ENCODE measurements at regions of chr7 and their contacts with region 1.

Region 1: GRCh38 chr7:26090927-26091519 is 61.0 kb upstream of the NFE2L3 start:
- DNase-seq: peak; percentile 62
- ATAC-seq: peak; percentile 45
- H3K4me3 ChIP-seq: no peak overlapping the region
- H3K4me3 Mint-ChIP-seq: peak overlapping the region; percentile 32
- H3K27ac ChIP-seq: no peak overlapping the region
- H3K27ac Mint-ChIP-seq: peak overlapping the region; percentile 0
- H3K4me1 ChIP-seq: peaks cover 17 to 22% of the 10 kb centered on the region in 2 donors
- H3K4me1 Mint-ChIP-seq: peaks cover 26% of the 10 kb centered on the region
- H3K27me3 ChIP-seq: no peaks in the 10 kb centered on the region
- H3K27me3 Mint-ChIP-seq: no peaks in the 10 kb centered on the region
- CTCF ChIP-seq: peak; percentile 66

Region 2: DNA sequence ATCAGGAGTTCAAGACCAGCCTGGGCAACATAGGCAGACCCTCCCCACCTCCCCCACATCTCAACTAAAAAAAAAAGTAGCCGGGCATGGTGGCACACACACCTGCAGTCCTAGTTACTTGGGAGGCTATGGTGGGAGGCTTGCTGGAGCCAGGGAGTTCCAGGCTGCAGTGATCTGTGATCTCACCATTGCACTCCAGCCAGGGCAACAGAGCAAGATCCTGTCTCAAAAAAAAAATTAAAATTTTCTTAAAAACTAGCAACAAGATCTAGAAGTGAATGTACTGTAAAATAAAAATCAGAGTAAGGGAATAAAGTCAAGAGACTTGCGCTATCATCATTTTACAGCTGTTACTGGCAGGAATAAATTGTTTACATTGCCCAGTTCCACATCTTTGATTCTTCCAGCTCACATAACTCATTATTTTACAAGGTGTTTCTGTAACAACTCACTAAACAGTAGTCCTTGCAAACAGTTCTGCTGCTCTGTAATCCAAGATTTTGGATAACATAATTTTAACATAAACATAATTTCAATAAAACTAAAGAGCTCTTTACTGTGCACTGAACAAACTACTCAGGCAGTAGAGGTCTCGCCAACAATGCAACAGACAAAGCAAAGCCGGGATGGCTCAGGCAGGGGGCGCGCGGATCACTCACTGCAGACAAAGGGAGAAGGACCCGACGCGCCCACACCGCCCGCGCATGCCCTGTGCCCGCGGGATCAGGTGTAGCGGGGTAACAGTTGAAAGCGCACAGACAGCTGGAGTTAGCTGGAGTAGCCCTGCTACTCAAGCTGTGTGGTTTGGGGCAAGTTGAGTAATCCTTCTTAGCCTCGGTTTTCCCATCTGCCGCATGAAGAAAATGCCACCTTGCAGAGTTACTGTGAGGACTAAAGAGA is 12.3 kb before region 1 on chr7:
- CTCF ChIA-PET with region 1: interaction called, 57 read pairs
- POLR2A ChIA-PET with region 1: interaction called, 5 read pairs
- intact Hi-C with region 1: no loop called
- DNase-seq: peak; percentile 88
- ATAC-seq: peak; percentile 100
- H3K4me3 ChIP-seq: no peak overlapping the region
- H3K4me3 Mint-ChIP-seq: peak overlapping the region; percentile 35
- H3K27ac ChIP-seq: no peak overlapping the region
- H3K27ac Mint-ChIP-seq: no peak overlapping the region
- H3K4me1 ChIP-seq: peaks cover 6 to 9% of the 10 kb centered on the region in 2 donors
- H3K4me1 Mint-ChIP-seq: peaks cover 9% of the 10 kb centered on the region
- H3K27me3 ChIP-seq: peaks cover 0 to 31% (median 14%) of the 10 kb centered on the region in 4 experiments
- H3K27me3 Mint-ChIP-seq: peaks cover 53% of the 10 kb centered on the region
- CTCF ChIP-seq: peak; percentile 71

Region 3: DNA sequence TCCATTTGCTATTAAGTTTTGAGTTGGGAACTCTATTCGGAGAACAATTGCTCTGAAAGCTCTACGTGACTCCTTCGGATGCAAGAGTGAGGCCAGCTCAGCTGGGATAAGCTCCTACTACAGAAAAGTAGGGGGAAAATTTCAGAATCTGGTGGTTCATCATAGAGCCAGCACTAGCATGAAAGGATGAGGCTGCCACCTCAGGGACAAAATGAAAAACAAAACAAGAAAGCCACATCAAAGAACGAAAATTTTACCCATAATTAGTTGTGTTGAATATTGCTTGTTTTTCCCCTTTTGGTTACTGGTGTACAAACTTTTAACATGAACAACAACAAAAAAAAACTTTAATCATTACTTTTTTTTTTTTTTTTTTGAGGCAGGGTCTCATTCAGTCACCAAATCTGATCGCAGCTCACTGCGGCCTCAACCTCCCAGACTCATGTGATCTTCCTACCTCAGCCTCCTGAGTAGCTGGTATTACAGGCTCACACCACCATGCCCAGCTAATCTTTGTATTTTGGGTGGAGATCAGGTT is 21.2 kb after region 1 on chr7:
- CTCF ChIA-PET with region 1: interaction called, 11 read pairs
- POLR2A ChIA-PET with region 1: no interaction called
- intact Hi-C with region 1: no loop called
- DNase-seq: no peak
- ATAC-seq: no peak
- H3K4me3 ChIP-seq: no peak overlapping the region
- H3K4me3 Mint-ChIP-seq: no peak overlapping the region
- H3K27ac ChIP-seq: no peak overlapping the region
- H3K27ac Mint-ChIP-seq: no peak overlapping the region
- H3K4me1 ChIP-seq: no peaks in the 10 kb centered on the region
- H3K4me1 Mint-ChIP-seq: no peaks in the 10 kb centered on the region
- H3K27me3 ChIP-seq: no peaks in the 10 kb centered on the region
- H3K27me3 Mint-ChIP-seq: no peaks in the 10 kb centered on the region
- CTCF ChIP-seq: no peak

Region 4: GRCh38 chr7:26159243-26159642 is 68.2 kb after region 1 on chr7:
- CTCF ChIA-PET with region 1: interaction called, 11 read pairs
- POLR2A ChIA-PET with region 1: no interaction called
- intact Hi-C with region 1: no loop called
- DNase-seq: no peak
- ATAC-seq: no peak
- H3K4me3 ChIP-seq: no peak overlapping the region
- H3K4me3 Mint-ChIP-seq: no peak overlapping the region
- H3K27ac ChIP-seq: no peak overlapping the region
- H3K27ac Mint-ChIP-seq: no peak overlapping the region
- H3K4me1 ChIP-seq: peaks cover 27 to 33% of the 10 kb centered on the region in 2 donors
- H3K4me1 Mint-ChIP-seq: peaks cover 44% of the 10 kb centered on the region
- H3K27me3 ChIP-seq: no peaks in the 10 kb centered on the region
- H3K27me3 Mint-ChIP-seq: no peaks in the 10 kb centered on the region
- CTCF ChIP-seq: no peak

Region 5: DNA sequence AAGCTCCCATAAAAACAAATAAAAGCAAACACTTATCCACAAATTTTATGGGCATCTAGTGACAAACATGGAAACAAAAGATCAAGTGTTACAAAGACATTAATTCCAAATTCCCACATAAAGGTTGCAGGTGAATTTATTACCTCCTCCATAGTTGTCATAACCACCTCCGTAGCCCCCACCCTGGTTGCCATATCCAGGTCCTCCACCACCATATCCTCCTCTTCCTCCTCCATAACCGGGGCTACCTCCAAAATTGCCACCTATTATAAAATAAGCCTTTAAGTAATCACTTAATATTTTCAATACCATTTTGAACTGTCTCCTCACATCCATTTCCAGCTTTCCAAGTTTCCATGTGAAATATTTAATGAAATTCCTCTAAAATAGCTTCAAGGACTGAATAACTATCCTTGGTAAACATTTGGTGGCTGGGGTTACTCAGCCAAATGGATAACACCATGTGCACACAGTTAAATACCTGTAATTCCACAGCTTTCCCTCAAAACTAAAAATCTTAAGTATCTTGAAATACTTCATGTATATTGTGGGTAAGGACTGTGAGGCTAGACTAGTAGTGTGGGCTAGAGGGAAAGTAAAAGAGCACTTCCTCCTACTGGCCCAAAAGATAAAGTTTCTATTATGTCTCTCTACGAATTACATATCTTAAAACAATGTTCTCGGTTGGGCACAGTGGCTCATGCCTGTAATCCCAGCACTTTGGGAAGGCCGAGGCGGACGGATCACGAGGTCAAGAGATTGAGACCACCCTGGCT is 102.6 kb after region 1 on chr7:
- CTCF ChIA-PET with region 1: interaction called, 114 read pairs
- POLR2A ChIA-PET with region 1: interaction called, 4 read pairs
- intact Hi-C with region 1: loop called (anchors 1 kb)
- DNase-seq: peak; percentile 37
- ATAC-seq: no peak
- H3K4me3 ChIP-seq: no peak overlapping the region
- H3K4me3 Mint-ChIP-seq: peak overlapping the region; percentile 59
- H3K27ac ChIP-seq: peak overlapping the region in 1 of 2 donors; percentile 31
- H3K27ac Mint-ChIP-seq: peak overlapping the region; percentile 83
- H3K4me1 ChIP-seq: peaks cover 59 to 62% of the 10 kb centered on the region in 2 donors
- H3K4me1 Mint-ChIP-seq: peaks cover 84% of the 10 kb centered on the region
- H3K27me3 ChIP-seq: no peaks in the 10 kb centered on the region
- H3K27me3 Mint-ChIP-seq: no peaks in the 10 kb centered on the region
- CTCF ChIP-seq: no peak

Measured in B cell (primary cell).